PC-9 (cell line): ENCODE measurements at regions of chr11 and their contacts with region 1.

Region 1: DNA sequence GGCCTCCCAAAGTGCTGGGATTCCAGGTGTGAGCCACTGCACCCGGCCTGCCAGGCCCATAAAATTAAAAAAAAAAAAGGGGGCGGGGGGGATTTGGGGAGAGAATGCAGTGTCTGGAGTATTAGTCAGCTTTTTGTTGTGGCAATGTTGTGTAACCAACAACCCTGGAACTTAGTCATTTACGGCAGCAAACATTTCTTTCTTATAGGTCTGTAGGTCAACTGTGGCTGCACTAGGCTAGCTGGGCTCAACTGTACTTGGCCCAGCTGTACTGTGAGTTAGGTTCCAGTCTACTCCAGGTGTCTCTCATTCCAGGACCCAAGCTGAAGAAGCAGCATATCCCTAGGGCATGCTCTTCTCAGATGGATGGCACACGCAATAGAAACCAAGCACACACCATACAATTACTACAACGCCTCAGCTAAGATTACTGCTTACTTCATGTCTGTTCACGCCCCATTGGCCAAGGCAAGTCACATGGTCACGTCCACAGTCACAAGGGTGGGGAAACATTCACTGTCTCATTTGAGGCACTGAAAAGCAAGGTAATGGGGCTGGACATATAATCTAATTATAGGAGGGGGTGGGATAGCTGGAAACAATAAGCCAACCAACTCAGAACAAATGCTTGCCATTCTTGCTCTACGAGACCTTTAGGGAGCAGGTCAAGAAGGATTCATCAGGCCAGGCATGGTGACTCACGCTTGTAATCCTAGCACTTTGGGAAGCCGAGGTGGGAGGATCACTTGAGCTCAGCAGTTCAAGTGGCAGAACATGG is 10.4 kb upstream of the SPINDOC start:
- DNase-seq: peak; percentile 81 to 95
- H3K4me3 ChIP-seq: peak overlapping the region; percentile 25; the same call in 1 of the 2 replicates
- H3K27ac ChIP-seq: peak overlapping the region; percentile 89
- H3K4me1 ChIP-seq: peaks cover 46% of the 10 kb centered on the region
- H3K27me3 ChIP-seq: no peaks in the 10 kb centered on the region
- CTCF ChIP-seq: no peak

Region 2: GRCh38 chr11:63779039-63779438 is 23.8 kb before region 1 on chr11:
- CTCF ChIA-PET with region 1: interaction called, 5 read pairs
- POLR2A ChIA-PET with region 1: interaction called, 11 read pairs
- intact Hi-C with region 1: no loop called
- DNase-seq: no peak
- H3K4me3 ChIP-seq: no peak overlapping the region
- H3K27ac ChIP-seq: no peak overlapping the region
- H3K4me1 ChIP-seq: no peaks in the 10 kb centered on the region
- H3K27me3 ChIP-seq: no peaks in the 10 kb centered on the region
- CTCF ChIP-seq: no peak

Region 3: GRCh38 chr11:63813035-63813562 is 10.3 kb after region 1 on chr11 and contains the start of gene SPINDOC:
- CTCF ChIA-PET with region 1: no interaction called
- POLR2A ChIA-PET with region 1: no interaction called
- intact Hi-C with region 1: loop called (anchors 1 kb)
- DNase-seq: peak in 1 of 2 experiments; percentile 84
- H3K4me3 ChIP-seq: peak within 1 kb of the TSS; percentile 99
- H3K27ac ChIP-seq: no peak within 1 kb of the TSS
- H3K4me1 ChIP-seq: peaks cover 17% of the 10 kb centered on the region
- H3K27me3 ChIP-seq: no peaks in the 10 kb centered on the region
- CTCF ChIP-seq: no peak
- total RNA-seq, gene SPINDOC: 46.8 and 49.7 TPM in 2 replicates